Right ventricle myocardium inferior (tissue), 1 donor: ENCODE measurements at regions of chr2 and their contacts with region 1.

Region 1: DNA sequence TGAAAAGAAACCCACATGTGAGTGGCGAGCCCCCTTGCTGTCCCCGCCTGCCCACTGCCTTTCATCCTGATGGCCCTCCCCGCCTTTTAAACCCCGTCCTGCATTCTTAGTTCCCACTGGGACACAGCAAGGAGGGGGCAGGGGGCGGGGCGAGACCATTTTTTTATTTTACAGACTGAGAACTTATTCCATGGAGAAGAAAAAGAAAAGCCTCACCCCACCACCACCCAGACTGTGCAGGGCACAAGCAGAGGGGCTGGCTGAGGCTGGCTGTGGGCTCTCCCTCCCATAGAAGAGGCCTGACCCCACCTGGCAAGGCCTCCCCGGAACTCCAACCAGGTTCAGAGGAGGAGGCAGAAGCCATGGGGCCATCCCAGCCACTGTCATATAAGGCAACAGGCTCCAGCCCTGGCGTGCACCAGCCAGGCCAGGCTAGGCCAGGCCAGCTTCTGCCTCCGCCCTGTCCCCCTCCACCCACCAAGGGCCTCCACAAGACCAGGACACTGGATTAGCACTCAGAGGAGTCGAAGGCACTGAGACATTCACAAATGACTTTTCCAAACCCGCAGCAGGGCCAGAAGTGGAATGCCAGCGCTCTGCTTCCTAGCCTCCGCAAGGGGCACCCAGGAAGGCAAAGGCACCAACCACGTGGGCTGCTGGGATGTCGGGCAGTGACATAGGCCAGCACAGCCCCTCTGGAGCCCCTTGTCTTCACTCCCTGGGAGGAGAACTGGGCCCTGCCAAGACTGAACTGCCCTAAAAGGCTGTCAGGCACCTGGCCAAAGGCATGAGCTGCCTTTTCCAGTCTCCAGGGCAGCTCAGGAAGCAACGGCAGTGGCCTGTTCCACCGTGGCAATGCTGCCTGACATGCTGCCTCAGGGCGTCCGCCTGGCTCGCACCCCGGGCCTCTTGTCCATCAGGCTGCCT is 37.5 kb upstream of the SEMA4C start:
- DNase-seq: peak; percentile 93
- ATAC-seq: peak; percentile 94

Region 2: DNA sequence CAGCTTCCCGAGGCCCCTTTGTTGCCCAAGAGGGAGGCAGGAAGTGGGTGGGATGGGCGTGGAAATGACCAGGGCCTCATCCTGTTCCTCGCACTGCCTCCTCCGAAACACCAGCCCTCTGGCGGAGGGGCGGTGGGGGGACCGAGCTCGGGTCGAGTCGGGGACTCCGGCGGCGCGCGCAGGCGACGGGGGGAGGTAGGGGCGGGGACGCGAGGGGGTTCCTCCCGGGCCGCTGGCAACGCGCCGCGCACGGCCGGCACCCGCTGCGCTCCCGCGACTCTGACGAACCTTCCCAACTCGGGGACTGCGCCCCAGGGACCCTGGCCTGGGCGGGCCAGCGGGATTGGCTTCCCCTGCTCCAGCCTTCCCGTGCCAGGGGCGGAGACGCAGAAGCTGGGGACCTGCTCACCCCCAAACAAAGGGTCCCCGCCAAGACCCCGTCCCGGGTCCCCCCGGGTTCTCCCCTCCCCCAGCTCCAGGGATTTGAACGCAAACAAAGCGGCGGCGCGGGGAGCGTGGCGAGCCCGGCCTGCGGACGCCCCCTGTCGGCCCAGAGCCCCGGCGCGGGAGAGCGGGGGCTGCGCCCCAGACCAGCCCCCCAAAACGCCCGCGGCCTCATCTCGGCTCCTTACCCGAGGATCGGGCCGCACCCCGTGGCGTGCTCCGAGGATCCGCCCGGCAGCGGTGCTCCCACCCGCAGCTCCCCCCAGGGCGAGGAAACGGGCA is 38.7 kb before region 1 on chr2:
- intact Hi-C with region 1: loop called (anchors 1 kb)
- DNase-seq: peak; percentile 93
- ATAC-seq: peak; percentile 73

Region 3: GRCh38 chr2:96951093-96951654 is 43.8 kb after region 1 on chr2:
- intact Hi-C with region 1: loop called (anchors 5 kb)
- DNase-seq: peak; percentile 80
- ATAC-seq: peak; percentile 78